ENCODE measurements at regions of chr6 and their contacts with region 1.

Region 1: GRCh38 chr6:81797591-81797990 is 45.1 kb upstream of the TENT5A start:
- DNase-seq: no peak

Region 2: DNA sequence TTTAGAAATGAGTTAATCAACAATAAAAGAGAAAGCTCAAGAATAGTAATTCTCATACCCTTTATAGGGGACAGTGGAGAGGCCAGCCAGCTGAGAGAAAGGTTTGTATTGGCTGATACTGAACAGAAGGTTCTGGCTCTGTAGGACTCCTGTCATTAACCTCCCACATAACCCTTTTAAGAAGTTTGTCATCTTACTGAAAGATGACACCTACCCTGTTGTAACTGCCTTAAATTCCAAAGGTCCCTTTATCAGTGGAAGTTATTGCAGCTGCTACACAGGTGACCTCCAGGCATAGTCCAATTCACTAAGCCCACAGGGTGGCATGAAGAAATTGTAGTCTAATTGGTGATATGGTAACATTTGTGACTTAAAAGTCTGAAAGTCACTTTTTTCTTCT is 835.2 kb before region 1 on chr6:
- intact Hi-C with region 1: loop called in 1 of 2 experiments (anchors 5 kb)
- DNase-seq: no peak

Measured in posterior vena cava (tissue), 2 donors.